ENCODE measurements at regions of chr6 and their contacts with region 1.

Region 1: DNA sequence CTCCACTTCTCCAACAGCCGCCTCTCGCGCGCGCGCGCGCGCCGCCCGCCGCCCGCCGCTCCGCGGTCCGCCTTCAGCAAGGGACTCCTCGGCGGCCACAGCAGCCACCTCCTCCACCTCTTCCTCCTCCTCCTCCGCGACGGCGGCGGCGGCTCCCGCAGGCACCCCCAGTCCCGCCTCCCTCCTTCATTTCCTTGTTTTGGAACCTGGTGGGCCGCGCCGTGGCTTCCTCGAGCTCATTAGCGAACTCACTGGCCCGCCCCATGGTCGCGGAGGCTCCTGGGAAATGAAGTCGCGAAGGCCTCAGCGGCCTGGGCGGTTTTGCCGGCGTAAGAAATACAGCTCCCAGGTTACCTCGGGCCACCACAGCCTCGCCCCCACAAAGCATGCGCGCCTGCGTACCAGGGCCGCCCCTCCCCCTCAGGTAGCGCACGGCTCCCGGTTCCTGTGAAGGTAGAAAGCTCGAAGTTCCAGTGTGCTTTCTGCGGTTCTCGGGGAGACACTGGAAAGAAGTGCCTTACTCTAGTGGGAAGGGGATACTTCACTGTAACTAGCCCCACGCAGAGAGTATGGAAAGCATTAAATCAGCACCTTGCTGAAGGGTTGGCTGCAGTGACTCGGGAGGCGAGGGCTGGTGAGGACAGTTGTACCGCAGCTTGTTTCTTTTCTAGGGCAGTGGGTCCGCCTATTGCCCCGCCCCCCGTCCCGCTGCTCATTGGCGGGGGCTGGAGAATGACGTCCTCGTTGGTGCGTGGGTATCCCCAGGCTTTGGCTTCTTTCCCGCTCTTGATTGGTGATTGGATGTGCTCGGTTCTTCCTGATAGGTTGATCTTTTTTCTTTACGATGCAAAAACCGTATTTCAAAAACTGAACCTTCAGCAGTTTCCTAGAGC is at the start of gene CDK19:
- DNase-seq: peak; percentile 96

Region 2: DNA sequence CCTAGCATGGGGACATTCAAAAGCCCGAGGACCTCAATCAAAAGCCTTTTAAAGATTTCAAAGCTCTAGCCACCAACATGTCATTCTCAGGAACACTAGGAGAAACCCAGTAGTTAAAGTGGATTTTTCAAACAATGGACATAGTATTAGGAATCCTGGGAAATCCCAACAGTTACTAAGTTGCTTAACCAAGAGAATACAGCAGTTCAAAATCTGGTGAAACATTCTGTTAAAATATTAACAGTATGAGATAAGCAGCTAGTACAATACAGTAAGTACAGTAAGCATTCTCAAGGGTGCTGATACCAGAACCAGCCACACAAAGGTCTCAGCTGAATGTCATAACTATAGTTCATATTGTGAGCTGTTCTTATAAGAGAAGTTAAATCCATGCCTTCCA is 68.8 kb before region 1 on chr6:
- CTCF ChIA-PET with region 1: no interaction called
- POLR2A ChIA-PET with region 1: interaction called, 12 read pairs
- DNase-seq: no peak

Region 3: GRCh38 chr6:110826236-110827129 is 11.0 kb after region 1 on chr6:
- CTCF ChIA-PET with region 1: interaction called, 3 read pairs
- POLR2A ChIA-PET with region 1: interaction called, 25 read pairs
- DNase-seq: no peak